CD4-positive, alpha-beta memory T cell (primary cell): ENCODE measurements at regions of chr3 and their contacts with region 1.

Region 1: DNA sequence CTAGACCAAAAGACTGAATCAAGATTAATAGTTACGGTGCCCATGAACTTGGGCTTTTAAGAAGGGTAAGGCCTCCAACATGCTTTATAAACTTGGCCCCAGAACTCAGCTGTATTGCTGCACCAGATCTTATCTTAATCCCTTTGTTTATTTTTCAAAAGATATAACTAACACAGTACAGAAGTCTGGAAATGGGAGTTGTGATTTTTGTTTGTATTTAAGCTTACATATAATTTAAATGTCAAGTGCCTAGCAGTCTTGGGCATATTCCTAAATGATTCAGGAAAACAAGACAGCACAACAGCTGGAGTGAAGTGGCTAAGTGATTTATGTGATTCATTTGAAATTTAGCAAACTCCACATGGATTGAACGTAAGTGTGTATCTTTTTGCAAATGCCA is 56.2 kb downstream of the NBEAL2 start:
- DNase-seq: no peak
- H3K4me3 ChIP-seq: no peak overlapping the region
- H3K4me3 Mint-ChIP-seq: no peak overlapping the region
- H3K27ac ChIP-seq: no peak overlapping the region
- H3K27ac Mint-ChIP-seq: peak overlapping the region in 4 of 7 donors; percentile 49 to 79 (median 59)
- H3K4me1 ChIP-seq: peaks cover 21% of the 10 kb centered on the region
- H3K4me1 Mint-ChIP-seq: peaks cover 30 to 42% (median 35%) of the 10 kb centered on the region in 4 donors
- H3K27me3 ChIP-seq: no peaks in the 10 kb centered on the region
- H3K27me3 Mint-ChIP-seq: no peaks in the 10 kb centered on the region

Region 2: DNA sequence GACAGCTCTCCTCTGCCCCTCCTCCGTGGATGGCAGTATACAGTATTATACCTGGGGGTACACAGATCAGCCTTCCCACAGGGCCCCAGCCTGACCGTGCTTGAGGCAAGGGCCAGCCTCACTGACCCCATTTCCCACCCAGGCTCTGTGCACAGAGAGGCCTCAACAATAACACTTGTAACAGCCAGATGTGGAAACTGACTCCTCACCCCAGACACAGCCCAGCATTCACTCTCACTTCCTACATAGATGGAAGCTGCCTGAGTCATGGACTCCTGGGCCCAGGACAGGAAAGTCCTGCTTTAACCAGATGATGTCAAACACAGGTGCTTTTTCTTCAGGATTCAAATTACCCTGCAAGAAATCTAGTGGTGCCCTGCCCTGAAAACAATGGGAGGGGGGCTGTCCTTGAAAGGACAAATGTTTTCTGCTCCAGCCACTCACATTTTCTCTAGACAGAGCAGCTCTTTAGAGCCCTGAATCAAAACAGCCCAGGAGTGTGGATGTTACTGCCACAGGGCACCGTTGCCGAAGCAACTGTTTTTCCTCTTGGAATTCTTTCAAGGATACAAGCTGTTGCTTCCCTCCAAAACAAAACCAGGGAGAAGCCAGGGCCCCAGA is 75.4 kb before region 1 on chr3:
- CTCF ChIA-PET with region 1: no interaction called
- POLR2A ChIA-PET with region 1: no interaction called
- intact Hi-C with region 1: no loop called
- DNase-seq: no peak
- H3K4me3 ChIP-seq: no peak overlapping the region
- H3K4me3 Mint-ChIP-seq: peak overlapping the region in 7 of 8 donors; percentile 29 to 79 (median 57)
- H3K27ac ChIP-seq: peak overlapping the region; percentile 24
- H3K27ac Mint-ChIP-seq: peak overlapping the region in 6 of 7 donors; percentile 7 to 92 (median 85)
- H3K4me1 ChIP-seq: peaks cover 74% of the 10 kb centered on the region
- H3K4me1 Mint-ChIP-seq: peaks cover 61 to 81% (median 70%) of the 10 kb centered on the region in 4 donors
- H3K27me3 ChIP-seq: no peaks in the 10 kb centered on the region
- H3K27me3 Mint-ChIP-seq: no peaks in the 10 kb centered on the region

Region 3: GRCh38 chr3:47024932-47025331 is 10.7 kb before region 1 on chr3:
- CTCF ChIA-PET with region 1: interaction called, 4 read pairs
- POLR2A ChIA-PET with region 1: interaction called, 3 read pairs
- intact Hi-C with region 1: loop called (anchors 2 kb)
- DNase-seq: no peak
- H3K4me3 ChIP-seq: no peak overlapping the region
- H3K4me3 Mint-ChIP-seq: no peak overlapping the region
- H3K27ac ChIP-seq: no peak overlapping the region
- H3K27ac Mint-ChIP-seq: peak overlapping the region in 5 of 7 donors; percentile 29 to 75 (median 68)
- H3K4me1 ChIP-seq: no peaks in the 10 kb centered on the region
- H3K4me1 Mint-ChIP-seq: peaks cover 16 to 28% (median 23%) of the 10 kb centered on the region in 4 donors
- H3K27me3 ChIP-seq: no peaks in the 10 kb centered on the region
- H3K27me3 Mint-ChIP-seq: no peaks in the 10 kb centered on the region

Region 4: GRCh38 chr3:47057212-47057671 is 21.6 kb after region 1 on chr3:
- CTCF ChIA-PET with region 1: no interaction called
- POLR2A ChIA-PET with region 1: interaction called, 4 read pairs
- intact Hi-C with region 1: loop called (anchors 1 kb)
- DNase-seq: peak; percentile 79 to 87 (median 83)
- H3K4me3 ChIP-seq: no peak overlapping the region
- H3K4me3 Mint-ChIP-seq: peak overlapping the region; percentile 21 to 75 (median 54)
- H3K27ac ChIP-seq: peak overlapping the region; percentile 50
- H3K27ac Mint-ChIP-seq: peak overlapping the region; percentile 85 to 97 (median 95)
- H3K4me1 ChIP-seq: peaks cover 32% of the 10 kb centered on the region
- H3K4me1 Mint-ChIP-seq: peaks cover 30 to 49% (median 38%) of the 10 kb centered on the region in 4 donors
- H3K27me3 ChIP-seq: no peaks in the 10 kb centered on the region
- H3K27me3 Mint-ChIP-seq: no peaks in the 10 kb centered on the region

Region 5: GRCh38 chr3:47082519-47082918 is 46.9 kb after region 1 on chr3:
- CTCF ChIA-PET with region 1: no interaction called
- POLR2A ChIA-PET with region 1: no interaction called
- intact Hi-C with region 1: no loop called
- DNase-seq: no peak
- H3K4me3 ChIP-seq: no peak overlapping the region
- H3K4me3 Mint-ChIP-seq: no peak overlapping the region
- H3K27ac ChIP-seq: no peak overlapping the region
- H3K27ac Mint-ChIP-seq: peak overlapping the region in 6 of 7 donors; percentile 10 to 62 (median 34)
- H3K4me1 ChIP-seq: no peaks in the 10 kb centered on the region
- H3K4me1 Mint-ChIP-seq: peaks cover 10 to 21% (median 15%) of the 10 kb centered on the region in 4 donors
- H3K27me3 ChIP-seq: no peaks in the 10 kb centered on the region
- H3K27me3 Mint-ChIP-seq: no peaks in the 10 kb centered on the region

Region 6: DNA sequence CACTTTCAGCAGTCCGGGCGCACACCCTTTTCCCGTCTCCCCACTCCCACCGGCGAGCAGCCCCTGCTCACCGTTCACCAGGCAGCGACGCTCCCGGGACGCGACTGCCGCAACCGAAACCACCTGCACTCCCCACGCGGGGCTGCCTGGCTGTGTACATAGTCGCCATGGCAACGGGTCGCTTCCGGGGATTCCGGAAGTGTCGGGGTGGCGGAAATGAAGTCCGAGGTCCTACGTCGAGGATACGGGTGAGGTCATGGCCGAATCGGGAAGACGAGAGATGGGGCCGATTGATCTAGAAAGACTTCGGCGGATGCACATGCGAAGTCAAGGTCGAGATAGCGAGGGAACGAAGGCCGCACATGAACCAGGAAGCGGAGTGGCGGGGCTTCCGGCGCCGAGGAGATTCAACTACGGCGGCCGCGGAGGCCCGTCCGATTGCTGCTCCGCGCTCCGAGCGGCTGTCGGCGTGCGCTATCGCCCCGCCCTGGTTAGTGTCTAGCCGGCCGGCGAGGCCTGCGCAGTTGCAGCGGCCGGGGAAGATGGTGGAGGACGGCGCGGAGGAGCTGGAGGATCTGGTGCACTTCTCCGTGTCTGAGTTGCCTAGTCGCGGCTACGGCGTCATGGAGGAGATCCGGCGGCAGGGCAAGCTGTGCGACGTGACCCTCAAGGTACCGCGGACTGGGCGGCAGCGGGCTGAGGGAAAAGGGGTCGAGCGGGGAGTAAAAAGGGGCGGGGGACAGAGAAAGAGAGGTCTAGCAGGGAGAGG is 247.0 kb after region 1 on chr3 and contains the starts of genes KIF9 and KLHL18:
- CTCF ChIA-PET with region 1: no interaction called
- POLR2A ChIA-PET with region 1: no interaction called
- intact Hi-C with region 1: loop called (anchors 5 kb)
- DNase-seq: peak; percentile 97 to 98 (median 98)
- H3K4me3 ChIP-seq: peak within 1 kb of the TSS; percentile 94 to 99
- H3K4me3 Mint-ChIP-seq: peak within 1 kb of the TSS; percentile 95 to 100 (median 98)
- H3K27ac ChIP-seq: peak within 1 kb of the TSS; percentile 95
- H3K27ac Mint-ChIP-seq: peak within 1 kb of the TSS; percentile 98 to 100 (median 100)
- H3K4me1 ChIP-seq: peaks cover 40% of the 10 kb centered on the region
- H3K4me1 Mint-ChIP-seq: peaks cover 19 to 54% (median 38%) of the 10 kb centered on the region in 4 donors
- H3K27me3 ChIP-seq: no peaks in the 10 kb centered on the region
- H3K27me3 Mint-ChIP-seq: no peaks in the 10 kb centered on the region
- total RNA-seq, gene KIF9: 2.3 to 3.2 TPM
- total RNA-seq, gene KLHL18: 21.8 to 26.7 TPM